CD4-positive, alpha-beta T cell (primary cell): ENCODE measurements at regions of chr10 and their contacts with region 1.

Region 1: GRCh38 chr10:110918643-110919363 is at the start of gene BBIP1:
- DNase-seq: peak in 6 of 14 experiments; percentile 69 to 100 (median 95)
- ATAC-seq: peak; percentile 94
- H3K4me3 ChIP-seq: peak within 1 kb of the TSS; percentile 97
- H3K4me3 Mint-ChIP-seq: peak within 1 kb of the TSS; percentile 99
- H3K27ac ChIP-seq: peak within 1 kb of the TSS; percentile 98 to 100
- H3K27ac Mint-ChIP-seq: peak within 1 kb of the TSS; percentile 99
- H3K4me1 ChIP-seq: peaks cover 8% of the 10 kb centered on the region
- H3K4me1 Mint-ChIP-seq: peaks cover 62% of the 10 kb centered on the region
- H3K27me3 ChIP-seq: no peaks in the 10 kb centered on the region
- H3K27me3 Mint-ChIP-seq: no peaks in the 10 kb centered on the region
- CTCF ChIP-seq: no peak
- total RNA-seq, gene BBIP1: 17.1 to 21.9 TPM

Region 2: DNA sequence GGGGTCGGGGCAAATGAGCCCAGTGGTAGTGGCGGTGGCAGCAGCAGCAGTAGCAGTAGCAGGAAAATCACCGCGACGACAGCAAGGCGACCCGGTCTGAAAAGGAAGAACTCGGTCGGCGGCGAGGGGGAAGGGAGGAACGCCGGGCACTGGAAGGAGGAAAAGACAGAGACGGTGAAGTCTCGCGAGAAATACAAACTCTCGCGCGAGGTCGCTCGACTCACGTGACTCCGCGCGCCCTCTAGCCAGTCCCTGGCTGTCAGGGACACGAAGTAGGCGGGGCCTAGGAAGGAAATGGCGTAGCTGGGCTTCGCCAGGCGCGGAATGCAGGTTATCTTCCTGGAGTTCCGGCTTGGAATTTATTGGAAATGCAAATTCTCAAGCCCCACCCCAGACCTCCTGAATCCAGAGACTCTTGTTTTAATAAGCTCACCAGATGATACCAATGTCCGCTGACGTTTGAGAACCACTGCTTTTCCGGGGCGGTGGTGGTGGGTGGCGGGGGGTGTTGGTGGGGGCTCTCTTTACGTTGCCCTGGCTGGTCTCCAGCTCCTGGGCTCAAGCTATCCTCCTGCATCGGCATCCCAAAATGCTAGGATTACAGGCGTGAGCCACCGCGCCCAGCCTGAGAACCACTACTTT is 613.9 kb before region 1 on chr10 and contains the start of gene SMNDC1:
- CTCF ChIA-PET with region 1: no interaction called
- POLR2A ChIA-PET with region 1: interaction called, 4 read pairs
- intact Hi-C with region 1: loop called in 1 of 2 experiments (anchors 10 kb)
- DNase-seq: peak; percentile 94 to 99 (median 96)
- ATAC-seq: peak; percentile 88
- H3K4me3 ChIP-seq: peak within 1 kb of the TSS; percentile 72
- H3K4me3 Mint-ChIP-seq: peak within 1 kb of the TSS; percentile 97
- H3K27ac ChIP-seq: peak within 1 kb of the TSS; percentile 74 to 90
- H3K27ac Mint-ChIP-seq: peak within 1 kb of the TSS; percentile 98
- H3K4me1 ChIP-seq: peaks cover 23% of the 10 kb centered on the region
- H3K4me1 Mint-ChIP-seq: peaks cover 61% of the 10 kb centered on the region
- H3K27me3 ChIP-seq: no peaks in the 10 kb centered on the region
- H3K27me3 Mint-ChIP-seq: no peaks in the 10 kb centered on the region
- CTCF ChIP-seq: no peak
- total RNA-seq, gene SMNDC1: 40.2 to 48.1 TPM

Region 3: DNA sequence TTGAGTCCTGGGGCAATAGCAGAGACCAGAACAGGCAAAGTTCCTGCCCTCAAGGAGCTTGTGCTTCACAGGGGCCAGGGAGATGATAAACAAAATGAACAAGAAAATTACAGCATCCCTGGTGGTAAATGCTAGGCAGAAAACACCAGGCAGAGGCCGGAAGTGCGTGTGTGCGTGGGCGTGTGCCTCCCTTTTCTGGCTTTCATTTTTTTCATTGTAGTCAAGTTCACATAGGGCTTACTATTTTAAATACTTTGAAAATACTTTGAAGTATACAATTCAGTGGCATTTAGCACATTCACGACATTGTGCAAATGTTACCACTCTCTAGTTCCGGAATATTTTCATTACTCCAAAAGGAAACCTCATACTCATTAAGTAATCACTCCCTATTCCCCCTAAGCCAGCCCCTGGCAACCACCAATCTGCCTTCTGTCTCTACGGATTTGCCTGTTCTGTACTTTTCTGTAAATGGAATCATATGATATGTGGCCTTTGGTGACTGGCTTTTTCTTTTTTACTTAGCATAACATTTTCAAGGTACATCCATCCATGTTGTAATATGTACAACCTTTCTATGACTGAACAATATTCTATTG is 135.2 kb before region 1 on chr10:
- CTCF ChIA-PET with region 1: no interaction called
- POLR2A ChIA-PET with region 1: no interaction called
- intact Hi-C with region 1: loop called in 1 of 2 experiments (anchors 1 kb)
- DNase-seq: peak; percentile 46 to 90 (median 71)
- ATAC-seq: peak; percentile 83
- H3K4me3 ChIP-seq: no peak overlapping the region
- H3K4me3 Mint-ChIP-seq: peak overlapping the region; percentile 0
- H3K27ac ChIP-seq: peak overlapping the region; percentile 31 to 62
- H3K27ac Mint-ChIP-seq: peak overlapping the region; percentile 75
- H3K4me1 ChIP-seq: peaks cover 21% of the 10 kb centered on the region
- H3K4me1 Mint-ChIP-seq: peaks cover 65% of the 10 kb centered on the region
- H3K27me3 ChIP-seq: no peaks in the 10 kb centered on the region
- H3K27me3 Mint-ChIP-seq: no peaks in the 10 kb centered on the region
- CTCF ChIP-seq: peak; percentile 10

Region 4: GRCh38 chr10:110864662-110865140 is 54.1 kb before region 1 on chr10:
- CTCF ChIA-PET with region 1: no interaction called
- POLR2A ChIA-PET with region 1: interaction called, 19 read pairs
- intact Hi-C with region 1: no loop called
- DNase-seq: peak in 11 of 14 experiments; percentile 26 to 95 (median 58)
- ATAC-seq: peak; percentile 67
- H3K4me3 ChIP-seq: peak overlapping the region; percentile 37
- H3K4me3 Mint-ChIP-seq: peak overlapping the region; percentile 86
- H3K27ac ChIP-seq: peak overlapping the region; percentile 88 to 99
- H3K27ac Mint-ChIP-seq: peak overlapping the region; percentile 96
- H3K4me1 ChIP-seq: peaks cover 97% of the 10 kb centered on the region
- H3K4me1 Mint-ChIP-seq: peaks cover 99% of the 10 kb centered on the region
- H3K27me3 ChIP-seq: no peaks in the 10 kb centered on the region
- H3K27me3 Mint-ChIP-seq: no peaks in the 10 kb centered on the region
- CTCF ChIP-seq: no peak

Region 5: GRCh38 chr10:110959379-110960332 is 40.9 kb after region 1 on chr10:
- CTCF ChIA-PET with region 1: no interaction called
- POLR2A ChIA-PET with region 1: interaction called, 3 read pairs
- intact Hi-C with region 1: loop called in 1 of 2 experiments (anchors 5 kb)
- DNase-seq: no peak
- ATAC-seq: no peak
- H3K4me3 ChIP-seq: no peak overlapping the region
- H3K4me3 Mint-ChIP-seq: no peak overlapping the region
- H3K27ac ChIP-seq: no peak overlapping the region
- H3K27ac Mint-ChIP-seq: no peak overlapping the region
- H3K4me1 ChIP-seq: no peaks in the 10 kb centered on the region
- H3K4me1 Mint-ChIP-seq: peaks cover 70% of the 10 kb centered on the region
- H3K27me3 ChIP-seq: no peaks in the 10 kb centered on the region
- H3K27me3 Mint-ChIP-seq: no peaks in the 10 kb centered on the region
- CTCF ChIP-seq: no peak

Region 6: DNA sequence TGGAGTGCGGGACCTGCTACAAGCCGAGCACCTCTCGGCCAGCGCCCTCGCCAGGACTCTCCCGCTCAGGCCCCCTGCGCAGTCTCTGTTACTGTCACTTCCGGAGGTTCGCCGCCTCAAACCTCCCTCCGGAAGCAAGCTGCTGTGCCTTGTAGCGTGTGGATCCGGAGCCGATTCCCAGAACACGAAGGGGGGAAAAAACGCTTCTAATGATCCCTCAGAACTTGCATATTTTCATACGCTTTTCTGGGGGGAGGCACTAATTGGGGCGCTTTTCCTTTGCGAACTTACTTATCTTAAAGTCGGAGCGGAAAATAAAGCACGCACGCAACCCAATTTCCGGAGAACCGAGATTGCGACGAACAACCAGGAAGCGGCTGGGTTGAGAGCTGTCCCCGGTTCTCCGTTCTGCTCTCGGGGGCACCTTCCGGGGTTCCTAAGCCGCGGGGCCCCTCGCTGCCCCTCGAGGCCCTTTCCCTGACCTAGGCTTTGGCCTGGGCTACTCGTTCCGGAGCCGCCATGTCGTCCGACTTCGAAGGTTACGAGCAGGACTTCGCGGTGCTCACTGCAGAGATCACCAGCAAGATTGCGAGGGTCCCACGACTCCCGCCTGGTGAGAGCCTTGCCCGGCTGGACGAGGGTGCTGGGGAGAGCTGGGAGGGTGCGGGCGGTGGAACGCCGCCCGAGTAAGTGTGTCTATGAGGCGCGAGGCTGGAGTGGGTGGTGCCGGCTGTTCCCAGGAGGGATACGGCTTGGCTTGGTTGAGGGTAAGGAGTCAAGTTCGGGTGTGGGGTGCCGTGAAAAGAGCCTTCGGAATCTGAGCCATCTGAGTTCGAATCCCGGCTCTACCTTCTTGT is 1528.3 kb after region 1 on chr10 and contains the starts of genes VTI1A and ZDHHC6:
- CTCF ChIA-PET with region 1: no interaction called
- POLR2A ChIA-PET with region 1: interaction called, 3 read pairs
- intact Hi-C with region 1: loop called in 1 of 2 experiments (anchors 10 kb)
- DNase-seq: peak; percentile 74 to 92 (median 79)
- ATAC-seq: peak; percentile 85
- H3K4me3 ChIP-seq: peak within 1 kb of the TSS; percentile 87
- H3K4me3 Mint-ChIP-seq: peak within 1 kb of the TSS; percentile 91
- H3K27ac ChIP-seq: peak within 1 kb of the TSS; percentile 79 to 84
- H3K27ac Mint-ChIP-seq: peak within 1 kb of the TSS; percentile 89
- H3K4me1 ChIP-seq: peaks cover 16% of the 10 kb centered on the region
- H3K4me1 Mint-ChIP-seq: peaks cover 73% of the 10 kb centered on the region
- H3K27me3 ChIP-seq: no peaks in the 10 kb centered on the region
- H3K27me3 Mint-ChIP-seq: no peaks in the 10 kb centered on the region
- CTCF ChIP-seq: no peak
- total RNA-seq, gene VTI1A: 54.5 to 56.5 TPM
- total RNA-seq, gene ZDHHC6: 34.3 to 39.9 TPM